Naive thymus-derived CD4-positive, alpha-beta T cell (primary cell): ENCODE measurements at regions of chr22 and their contacts with region 1.

Region 1: DNA sequence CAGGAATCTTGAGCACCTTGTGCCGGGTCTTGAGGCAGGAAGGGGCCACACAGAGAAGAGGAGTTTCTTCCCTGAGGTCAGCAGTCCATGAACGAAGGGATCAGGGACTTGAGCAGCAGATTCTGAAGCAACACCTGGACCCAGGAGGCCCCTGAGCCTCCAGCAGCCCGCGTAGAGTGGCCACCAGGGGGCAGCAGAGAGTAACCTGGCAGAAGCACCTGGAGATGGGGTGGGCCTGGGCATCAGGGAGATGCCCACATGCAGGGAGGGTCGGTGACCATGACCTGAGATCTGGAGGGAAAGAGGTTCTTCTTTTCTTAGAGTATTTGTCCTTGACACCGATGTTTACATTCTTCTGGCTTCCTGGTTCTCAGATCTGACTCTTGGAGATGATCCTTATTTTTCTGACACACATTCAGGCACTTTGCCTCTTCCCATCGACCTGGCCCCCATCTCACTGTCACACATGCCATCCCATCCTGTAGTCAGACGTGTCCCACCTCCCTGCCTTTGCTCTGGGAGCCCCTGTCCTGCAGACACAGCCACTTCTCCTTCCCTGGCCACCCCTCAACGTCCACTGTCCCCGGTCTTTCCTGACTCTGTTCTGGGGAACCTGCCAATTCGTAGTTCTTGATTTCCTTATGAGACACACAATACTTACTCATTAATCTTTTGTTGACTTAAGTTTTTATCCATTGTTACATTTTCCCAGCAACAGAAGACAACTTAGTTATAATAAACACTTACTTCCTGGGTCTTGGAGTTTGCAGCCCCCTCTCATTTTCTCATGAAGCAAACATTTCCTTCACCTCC is 66.5 kb downstream of the GGTLC2 start:
- DNase-seq: peak; percentile 46 to 79 (median 64)
- ATAC-seq: peak; percentile 66
- H3K4me3 ChIP-seq: no peak overlapping the region
- H3K4me3 Mint-ChIP-seq: no peak overlapping the region
- H3K27ac ChIP-seq: no peak overlapping the region
- H3K27ac Mint-ChIP-seq: no peak overlapping the region
- H3K4me1 ChIP-seq: no peaks in the 10 kb centered on the region
- H3K4me1 Mint-ChIP-seq: peaks cover 0 to 3% (median 0%) of the 10 kb centered on the region in 7 donors
- H3K27me3 ChIP-seq: no peaks in the 10 kb centered on the region
- H3K27me3 Mint-ChIP-seq: peaks cover 0 to 6% (median 0%) of the 10 kb centered on the region in 5 donors

Region 2: DNA sequence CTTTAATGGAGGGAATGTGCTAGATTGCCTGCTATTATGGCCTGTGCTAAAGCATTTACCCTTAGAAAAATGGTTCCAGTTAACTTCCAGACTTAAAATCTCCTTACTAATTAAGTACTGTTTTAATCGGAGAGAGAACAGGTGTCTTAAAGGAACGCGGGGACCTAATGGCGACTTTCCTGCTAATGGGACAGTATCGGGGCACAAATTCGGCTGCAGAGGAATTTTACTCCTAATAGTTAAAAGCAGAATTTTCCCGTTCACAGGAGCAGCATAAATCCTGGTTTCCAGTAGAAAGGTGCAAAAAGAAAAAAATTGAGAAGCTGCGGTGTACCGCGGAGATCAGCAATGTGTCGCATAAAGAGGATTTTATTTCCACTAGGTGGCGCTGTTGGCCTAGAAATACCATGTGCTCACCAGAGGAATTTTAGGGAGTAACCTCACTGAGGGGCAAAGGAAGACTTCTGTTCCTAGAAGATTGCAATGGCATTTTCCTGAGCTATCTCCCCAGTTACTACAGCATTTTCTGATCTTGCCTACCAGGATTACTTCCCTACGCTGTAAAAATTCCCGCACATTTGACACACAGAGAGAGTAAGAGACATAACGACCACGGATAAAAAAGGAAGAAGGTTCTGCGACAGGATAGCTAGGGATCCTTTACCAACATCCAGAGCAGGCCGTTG is 246.9 kb before region 1 on chr22:
- CTCF ChIA-PET with region 1: no interaction called
- POLR2A ChIA-PET with region 1: no interaction called
- intact Hi-C with region 1: loop called in 1 of 2 experiments (anchors 10 kb)
- DNase-seq: peak; percentile 10 to 55 (median 42)
- ATAC-seq: peak; percentile 44
- H3K4me3 ChIP-seq: no peak overlapping the region
- H3K4me3 Mint-ChIP-seq: no peak overlapping the region
- H3K27ac ChIP-seq: no peak overlapping the region
- H3K27ac Mint-ChIP-seq: no peak overlapping the region
- H3K4me1 ChIP-seq: no peaks in the 10 kb centered on the region
- H3K4me1 Mint-ChIP-seq: no peaks in the 10 kb centered on the region
- H3K27me3 ChIP-seq: peaks cover 0 to 11% of the 10 kb centered on the region in 2 donors
- H3K27me3 Mint-ChIP-seq: peaks cover 27 to 50% (median 48%) of the 10 kb centered on the region in 5 donors

Region 3: DNA sequence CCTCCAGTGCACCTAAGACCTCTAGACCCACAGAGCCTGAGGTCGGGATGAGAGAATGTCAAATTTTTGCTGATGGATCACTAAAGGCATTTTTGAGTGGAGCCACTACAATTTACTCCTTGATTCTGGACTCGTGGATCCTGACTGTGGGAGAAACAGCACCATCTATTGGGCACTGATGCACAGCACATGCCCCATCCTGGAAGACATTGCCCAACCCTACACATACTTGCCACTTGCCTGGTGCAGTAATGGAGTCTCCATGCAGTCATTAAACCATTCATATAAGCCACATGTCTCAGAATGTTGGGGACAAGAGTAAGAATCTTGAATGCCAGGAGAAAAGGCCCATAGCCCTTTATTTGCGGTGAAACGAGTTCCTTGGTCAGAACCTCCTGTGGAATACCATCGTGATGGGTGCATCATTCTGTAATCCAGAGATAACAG is 37.4 kb after region 1 on chr22:
- CTCF ChIA-PET with region 1: interaction called, 12 read pairs
- POLR2A ChIA-PET with region 1: interaction called, 3 read pairs
- intact Hi-C with region 1: loop called in 1 of 2 experiments (anchors 1 kb)
- DNase-seq: peak in 6 of 9 donors; percentile 17 to 34 (median 26)
- ATAC-seq: peak; percentile 78
- H3K4me3 ChIP-seq: no peak overlapping the region
- H3K4me3 Mint-ChIP-seq: no peak overlapping the region
- H3K27ac ChIP-seq: no peak overlapping the region
- H3K27ac Mint-ChIP-seq: peak overlapping the region in 2 of 9 donors; percentile 21 to 34
- H3K4me1 ChIP-seq: peaks cover 6 to 30% of the 10 kb centered on the region in 2 donors
- H3K4me1 Mint-ChIP-seq: peaks cover 2 to 23% (median 15%) of the 10 kb centered on the region in 7 donors
- H3K27me3 ChIP-seq: no peaks in the 10 kb centered on the region
- H3K27me3 Mint-ChIP-seq: peaks cover 0 to 19% (median 4%) of the 10 kb centered on the region in 5 donors

Region 4: GRCh38 chr22:22764085-22764484 is 53.2 kb after region 1 on chr22:
- CTCF ChIA-PET with region 1: no interaction called
- POLR2A ChIA-PET with region 1: no interaction called
- intact Hi-C with region 1: loop called in 1 of 2 experiments (anchors 2 kb)
- DNase-seq: no peak
- ATAC-seq: no peak
- H3K4me3 ChIP-seq: no peak overlapping the region
- H3K4me3 Mint-ChIP-seq: no peak overlapping the region
- H3K27ac ChIP-seq: no peak overlapping the region
- H3K27ac Mint-ChIP-seq: peak overlapping the region in 1 of 9 donors; percentile 25
- H3K4me1 ChIP-seq: peaks cover 0 to 48% of the 10 kb centered on the region in 2 donors
- H3K4me1 Mint-ChIP-seq: peaks cover 0 to 7% (median 0%) of the 10 kb centered on the region in 7 donors
- H3K27me3 ChIP-seq: no peaks in the 10 kb centered on the region
- H3K27me3 Mint-ChIP-seq: peaks cover 5 to 19% (median 7%) of the 10 kb centered on the region in 5 donors